Activated T-helper 1 cell treated with anti-CD3 and anti-CD28 coated beads, Interleukin-12 subunit alpha, Interleukin-12 subunit beta, Interleukin-2, Interleukin-4 antibody, amounts not matched to agents 30 ng/mL and 10 ng/mL and 1 ng/mL, durations not matched to agents 14 hours and 24 hours and 36 hours (primary cell): ENCODE measurements at regions of chr1 and their contacts with region 1.

Region 1: DNA sequence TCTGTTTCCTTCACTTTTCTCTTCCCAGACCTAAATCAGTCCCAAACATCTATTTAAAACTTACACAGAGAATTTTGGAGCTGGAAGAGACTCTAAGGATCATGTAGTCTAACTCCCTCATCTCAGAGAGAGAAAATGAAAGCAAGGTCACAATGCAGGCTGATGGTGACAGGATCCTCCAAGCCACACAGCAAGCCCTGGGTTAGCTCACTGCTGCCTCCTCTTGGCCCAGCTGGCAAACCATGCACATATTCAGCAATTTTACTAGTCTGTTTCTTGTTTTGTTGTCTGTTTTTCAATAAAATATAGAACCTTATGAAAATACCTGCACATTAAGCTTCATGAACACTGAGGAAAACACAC is 27.7 kb upstream of the LY9 start:
- DNase-seq: peak; percentile 79
- H3K4me3 Mint-ChIP-seq: peak overlapping the region; percentile 83
- H3K27ac Mint-ChIP-seq: peak overlapping the region; percentile 89
- H3K4me1 Mint-ChIP-seq: peaks cover 49% of the 10 kb centered on the region
- H3K27me3 Mint-ChIP-seq: no peaks in the 10 kb centered on the region

Region 2: DNA sequence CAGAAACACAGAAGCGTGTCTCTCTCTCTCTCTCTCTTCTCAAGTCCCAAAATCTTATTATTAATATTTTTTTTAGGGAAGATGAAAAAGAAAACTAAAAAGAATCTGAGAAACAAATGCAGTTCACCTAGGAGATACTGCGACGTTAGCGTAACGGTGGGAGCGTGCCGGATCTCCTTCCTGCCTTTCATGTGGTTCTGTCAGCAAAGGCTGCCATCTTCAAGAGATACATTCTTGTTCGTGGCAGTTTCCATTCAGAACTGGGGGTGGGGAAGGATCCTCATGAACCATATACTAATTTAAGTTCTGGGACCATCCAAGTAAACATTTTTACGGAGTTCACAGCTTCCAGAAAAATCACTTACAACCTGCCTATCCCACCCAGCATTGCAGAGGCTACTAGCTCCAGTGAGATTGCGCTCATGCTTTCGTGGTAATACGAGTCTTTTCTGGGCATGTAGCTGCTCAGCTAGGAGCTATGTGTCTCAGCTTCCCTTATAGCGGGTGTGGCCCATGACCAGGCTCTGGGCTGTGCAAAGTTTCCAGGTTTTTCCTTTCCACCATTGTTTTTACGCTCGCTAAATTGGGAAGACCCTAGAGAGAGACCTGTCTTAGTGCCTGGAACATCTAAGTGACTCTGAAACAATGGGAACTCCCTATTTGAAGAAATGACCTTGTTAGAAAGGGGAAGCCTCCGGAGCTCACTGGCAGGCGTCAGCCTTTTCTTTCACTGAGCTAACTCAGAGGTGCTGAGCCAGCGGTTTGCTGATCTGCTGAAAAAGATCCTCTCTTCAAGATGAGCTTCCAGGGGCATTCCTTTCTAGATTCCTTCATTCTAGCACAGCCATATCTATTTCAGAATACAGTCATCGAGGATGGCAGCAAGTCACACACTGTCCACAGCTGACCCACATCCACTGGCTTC is 138.7 kb before region 1 on chr1:
- intact Hi-C with region 1: loop called (anchors 5 kb)
- DNase-seq: peak; percentile 76
- H3K4me3 Mint-ChIP-seq: peak overlapping the region; percentile 69
- H3K27ac Mint-ChIP-seq: peak overlapping the region; percentile 99
- H3K4me1 Mint-ChIP-seq: peaks cover 98% of the 10 kb centered on the region
- H3K27me3 Mint-ChIP-seq: no peaks in the 10 kb centered on the region

Region 3: DNA sequence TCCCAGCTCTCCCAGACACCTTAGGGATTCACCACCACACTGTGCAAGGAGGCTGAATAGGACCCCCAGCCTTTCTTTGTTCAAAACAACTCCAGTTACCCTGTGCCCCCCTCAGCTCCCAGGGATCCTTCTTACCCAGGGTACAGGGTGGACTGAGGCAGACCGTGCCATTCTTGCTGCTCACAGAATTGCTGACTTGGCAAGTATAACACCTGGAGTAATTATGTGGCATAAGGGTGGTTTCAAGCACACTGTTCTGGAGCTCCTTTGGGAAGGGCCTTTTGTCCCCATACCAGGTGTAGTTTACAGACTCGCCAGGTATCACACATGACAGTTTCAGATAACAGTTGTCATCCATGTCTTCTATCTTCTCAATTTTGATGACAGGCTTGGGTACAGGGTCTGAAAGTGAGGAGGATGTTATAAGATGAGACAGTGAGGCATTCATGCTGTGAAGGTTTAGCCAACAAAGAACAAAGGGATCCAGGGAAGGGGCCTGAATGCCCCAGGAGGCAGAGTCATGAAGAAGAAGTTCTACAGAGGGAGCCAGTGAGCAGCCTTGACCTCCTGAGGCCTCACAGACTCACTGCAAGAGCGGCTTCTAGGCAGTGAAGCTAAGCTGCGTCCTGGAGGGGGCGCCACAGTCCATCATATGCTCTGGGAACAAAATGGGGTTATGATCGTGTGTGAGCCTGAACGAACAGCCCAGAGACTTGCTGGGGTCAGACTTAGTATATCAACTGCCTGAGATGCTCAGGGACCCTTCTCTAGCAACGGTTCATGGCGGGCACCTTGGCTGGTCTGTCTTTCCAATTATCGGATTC is 87.0 kb before region 1 on chr1:
- intact Hi-C with region 1: loop called (anchors 1 kb)
- DNase-seq: peak; percentile 78
- H3K4me3 Mint-ChIP-seq: peak overlapping the region; percentile 60
- H3K27ac Mint-ChIP-seq: peak overlapping the region; percentile 85
- H3K4me1 Mint-ChIP-seq: peaks cover 81% of the 10 kb centered on the region
- H3K27me3 Mint-ChIP-seq: no peaks in the 10 kb centered on the region

Region 4: GRCh38 chr1:160726498-160727315 is 41.6 kb before region 1 on chr1:
- intact Hi-C with region 1: loop called (anchors 1 kb)
- DNase-seq: no peak
- H3K4me3 Mint-ChIP-seq: no peak overlapping the region
- H3K27ac Mint-ChIP-seq: no peak overlapping the region
- H3K4me1 Mint-ChIP-seq: peaks cover 18% of the 10 kb centered on the region
- H3K27me3 Mint-ChIP-seq: no peaks in the 10 kb centered on the region

Region 5: DNA sequence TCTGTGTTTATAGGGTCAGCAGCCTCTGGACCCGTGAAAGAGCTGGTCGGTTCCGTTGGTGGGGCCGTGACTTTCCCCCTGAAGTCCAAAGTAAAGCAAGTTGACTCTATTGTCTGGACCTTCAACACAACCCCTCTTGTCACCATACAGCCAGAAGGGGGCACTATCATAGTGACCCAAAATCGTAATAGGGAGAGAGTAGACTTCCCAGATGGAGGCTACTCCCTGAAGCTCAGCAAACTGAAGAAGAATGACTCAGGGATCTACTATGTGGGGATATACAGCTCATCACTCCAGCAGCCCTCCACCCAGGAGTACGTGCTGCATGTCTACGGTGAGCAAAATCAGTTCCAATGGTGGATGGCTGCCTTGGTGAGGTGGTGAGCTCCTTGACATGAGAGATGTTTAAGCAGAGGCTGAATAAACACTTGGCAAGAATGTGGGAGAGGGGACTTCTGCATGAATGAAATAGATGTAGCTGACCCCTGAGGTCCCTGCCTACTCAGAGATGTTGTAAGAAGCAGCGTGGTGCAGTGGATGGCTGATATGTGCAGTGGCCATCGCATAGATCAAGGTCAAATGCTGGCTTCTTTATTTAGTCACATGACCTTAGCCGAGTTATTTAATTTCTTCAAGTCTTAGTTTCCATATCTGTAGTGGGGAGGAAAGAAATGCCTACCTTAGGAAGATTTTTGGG is 19.9 kb before region 1 on chr1:
- intact Hi-C with region 1: loop called (anchors 2 kb)
- DNase-seq: no peak
- H3K4me3 Mint-ChIP-seq: peak overlapping the region; percentile 3
- H3K27ac Mint-ChIP-seq: peak overlapping the region; percentile 61
- H3K4me1 Mint-ChIP-seq: peaks cover 92% of the 10 kb centered on the region
- H3K27me3 Mint-ChIP-seq: no peaks in the 10 kb centered on the region

Region 6: DNA sequence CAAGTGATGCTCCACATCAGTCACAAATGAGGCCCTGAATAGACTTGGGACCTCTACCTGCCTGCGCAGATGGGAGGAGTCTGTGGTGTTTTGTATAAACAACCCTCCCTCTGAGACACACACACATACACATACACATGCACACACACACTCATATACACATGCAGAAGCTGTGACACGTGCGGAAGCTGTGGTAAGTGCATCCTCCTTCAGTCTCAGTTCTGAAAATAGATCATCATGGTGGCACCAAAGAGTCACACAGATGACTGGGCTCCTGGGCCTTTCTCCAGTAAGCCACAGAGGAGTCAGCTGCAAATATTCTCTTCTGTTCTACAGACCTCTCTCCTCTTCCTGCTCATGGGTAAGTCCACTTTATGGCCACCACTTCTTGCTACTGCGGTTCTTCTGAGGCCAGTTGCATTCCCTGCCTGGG is 27.7 kb after region 1 on chr1 and contains the start of gene LY9:
- intact Hi-C with region 1: loop called (anchors 1 kb)
- DNase-seq: peak; percentile 76
- H3K4me3 Mint-ChIP-seq: peak within 1 kb of the TSS; percentile 73
- H3K27ac Mint-ChIP-seq: peak within 1 kb of the TSS; percentile 77
- H3K4me1 Mint-ChIP-seq: peaks cover 67% of the 10 kb centered on the region
- H3K27me3 Mint-ChIP-seq: peaks cover 14% of the 10 kb centered on the region
- total RNA-seq, gene LY9: 0.49 and 0.71 TPM in 2 replicates

Region 7: DNA sequence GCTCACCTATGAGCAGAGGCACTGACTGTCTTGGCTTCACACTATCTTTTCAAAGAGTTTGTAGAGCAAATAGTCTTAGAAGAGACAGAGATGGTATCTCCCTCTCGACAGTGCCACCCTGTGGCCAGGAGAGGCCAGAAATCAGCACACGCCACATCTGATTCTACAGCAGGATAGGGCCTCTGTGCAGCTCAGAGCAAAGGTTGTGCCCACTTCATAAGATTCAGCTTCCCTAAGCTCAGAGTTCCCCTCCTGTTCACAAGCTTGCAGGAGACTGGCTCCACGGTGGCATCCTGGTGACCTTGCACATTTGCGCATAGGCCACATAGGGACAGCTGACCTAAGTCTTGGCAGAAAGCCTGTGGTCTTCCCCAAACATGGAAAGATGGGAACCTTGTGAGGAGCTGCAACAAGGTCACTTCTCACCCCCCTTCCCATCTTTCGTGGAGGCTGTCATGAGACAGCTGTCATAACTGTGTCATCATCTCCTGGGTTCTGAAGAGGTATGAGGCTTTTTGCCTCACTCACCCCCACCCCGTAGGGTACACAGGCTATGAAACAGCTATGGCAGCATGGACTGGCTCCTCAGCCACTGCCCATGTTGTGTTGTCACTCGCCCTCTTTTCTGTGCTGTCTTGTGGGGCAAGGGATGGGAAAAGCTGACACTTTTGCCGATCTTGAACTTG is 183.3 kb after region 1 on chr1:
- intact Hi-C with region 1: loop called (anchors 1 kb)
- DNase-seq: peak; percentile 52
- H3K4me3 Mint-ChIP-seq: no peak overlapping the region
- H3K27ac Mint-ChIP-seq: no peak overlapping the region
- H3K4me1 Mint-ChIP-seq: peaks cover 11% of the 10 kb centered on the region
- H3K27me3 Mint-ChIP-seq: peaks cover 6% of the 10 kb centered on the region